ENCODE measurements at regions of chr12 and their contacts with region 1.

Region 1: GRCh38 chr12:23204933-23205778 is 580.2 kb downstream of the ETNK1 start:
- DNase-seq: peak; percentile 65
- H3K4me3 ChIP-seq: no peak overlapping the region
- H3K27ac ChIP-seq: no peak overlapping the region
- H3K4me1 ChIP-seq: no peaks in the 10 kb centered on the region
- H3K27me3 ChIP-seq: peaks cover 0 to 3% of the 10 kb centered on the region in 2 experiments
- CTCF ChIP-seq: peak; percentile 67 to 74
- POLR2A ChIP-seq: no peak

Region 2: GRCh38 chr12:23361971-23362370 is 156.8 kb after region 1 on chr12:
- CTCF ChIA-PET with region 1: interaction called, 3 read pairs
- POLR2A ChIA-PET with region 1: no interaction called
- dilution Hi-C with region 1: no loop called
- intact Hi-C with region 1: loop called (anchors 5 kb)
- DNase-seq: no peak
- H3K4me3 ChIP-seq: no peak overlapping the region
- H3K27ac ChIP-seq: no peak overlapping the region
- H3K4me1 ChIP-seq: no peaks in the 10 kb centered on the region
- H3K27me3 ChIP-seq: no peaks in the 10 kb centered on the region
- CTCF ChIP-seq: peak in 1 of 2 donors; percentile 14
- POLR2A ChIP-seq: no peak

Region 3: GRCh38 chr12:23376238-23376637 is 171.1 kb after region 1 on chr12:
- CTCF ChIA-PET with region 1: interaction called, 22 read pairs
- POLR2A ChIA-PET with region 1: no interaction called
- dilution Hi-C with region 1: no loop called
- intact Hi-C with region 1: no loop called
- DNase-seq: peak; percentile 12
- H3K4me3 ChIP-seq: no peak overlapping the region
- H3K27ac ChIP-seq: no peak overlapping the region
- H3K4me1 ChIP-seq: no peaks in the 10 kb centered on the region
- H3K27me3 ChIP-seq: no peaks in the 10 kb centered on the region
- CTCF ChIP-seq: peak; percentile 4 to 16
- POLR2A ChIP-seq: no peak

Region 4: DNA sequence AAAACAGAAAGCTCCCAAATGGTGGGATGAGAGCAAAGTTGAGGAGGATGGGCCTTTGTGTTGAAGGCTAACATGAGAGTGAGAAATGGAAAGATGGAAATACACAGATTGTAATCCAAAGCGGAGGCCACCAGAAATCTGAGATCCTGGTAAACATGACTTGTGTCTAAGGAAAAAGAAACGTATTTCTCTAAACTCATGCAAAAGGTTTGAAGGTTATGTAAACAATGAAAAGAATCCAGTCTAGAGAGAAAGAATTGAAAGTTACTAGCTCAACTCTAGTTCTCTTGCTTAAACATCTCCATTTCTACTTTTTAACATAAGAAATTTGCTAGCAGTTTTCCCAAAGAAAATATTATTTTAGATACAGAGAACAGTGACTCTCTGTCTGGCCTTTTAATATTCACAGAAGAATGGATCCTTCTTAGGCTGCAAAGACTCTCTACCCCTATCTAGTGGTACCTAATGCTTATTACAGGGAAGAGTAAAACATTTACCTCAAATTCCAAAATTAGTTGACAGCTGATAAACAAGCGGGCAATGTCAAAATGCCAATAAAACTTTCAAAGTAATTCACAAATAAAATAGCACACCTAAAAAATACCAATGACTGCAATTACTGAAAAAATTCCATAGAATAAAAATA is 820.1 kb after region 1 on chr12:
- CTCF ChIA-PET with region 1: no interaction called
- POLR2A ChIA-PET with region 1: no interaction called
- dilution Hi-C with region 1: no loop called
- intact Hi-C with region 1: loop called (anchors 5 kb)
- DNase-seq: no peak
- H3K4me3 ChIP-seq: no peak overlapping the region
- H3K27ac ChIP-seq: no peak overlapping the region
- H3K4me1 ChIP-seq: no peaks in the 10 kb centered on the region
- H3K27me3 ChIP-seq: peaks cover 7 to 12% of the 10 kb centered on the region in 2 experiments
- CTCF ChIP-seq: peak; percentile 21 to 40
- POLR2A ChIP-seq: no peak

Region 5: GRCh38 chr12:24728366-24728765 is 1523.2 kb after region 1 on chr12:
- CTCF ChIA-PET with region 1: no interaction called
- POLR2A ChIA-PET with region 1: no interaction called
- dilution Hi-C with region 1: no loop called
- intact Hi-C with region 1: loop called (anchors 5 kb)
- DNase-seq: peak; percentile 31
- H3K4me3 ChIP-seq: no peak overlapping the region
- H3K27ac ChIP-seq: no peak overlapping the region
- H3K4me1 ChIP-seq: no peaks in the 10 kb centered on the region
- H3K27me3 ChIP-seq: peaks cover 2 to 3% of the 10 kb centered on the region in 2 experiments
- CTCF ChIP-seq: peak; percentile 10 to 48
- POLR2A ChIP-seq: no peak

Region 6: DNA sequence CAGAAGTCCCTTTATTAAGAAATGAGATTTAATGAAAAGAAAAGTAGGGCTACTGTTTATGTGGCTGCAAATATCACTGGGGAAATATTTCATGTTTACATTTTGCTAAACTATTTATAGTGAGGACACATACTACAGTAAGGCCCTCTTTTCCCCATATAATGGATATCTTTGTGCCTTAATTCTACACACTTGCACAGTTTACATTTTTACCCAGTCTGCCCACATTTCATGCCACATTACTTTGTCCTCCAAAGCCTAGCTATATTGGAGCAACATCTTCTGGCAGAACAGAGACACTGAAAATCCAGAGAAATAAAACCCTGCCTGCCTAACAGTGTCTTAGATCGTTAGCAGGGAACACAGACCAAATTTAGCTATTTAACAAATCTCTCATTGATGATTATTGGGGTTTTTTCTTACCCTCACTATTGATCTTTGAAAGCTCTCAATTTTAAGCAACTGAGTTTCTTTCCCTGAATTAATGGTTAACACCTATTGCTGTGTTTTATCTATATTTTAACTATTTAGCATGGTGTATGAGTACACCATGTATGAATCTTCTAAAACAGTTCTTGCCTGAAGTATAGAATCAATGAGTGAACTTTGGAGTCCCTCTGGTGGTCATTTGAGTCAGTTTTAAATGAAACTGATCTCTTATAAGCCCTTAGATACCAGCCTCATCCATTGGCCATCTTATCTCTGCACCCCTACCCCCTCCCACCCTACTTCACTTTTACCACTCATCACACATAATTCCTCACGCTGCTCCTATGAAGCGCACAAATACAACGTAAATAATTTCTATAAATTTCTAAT is 1573.5 kb after region 1 on chr12:
- CTCF ChIA-PET with region 1: interaction called, 8 read pairs
- POLR2A ChIA-PET with region 1: no interaction called
- dilution Hi-C with region 1: no loop called
- intact Hi-C with region 1: loop called (anchors 1 kb)
- DNase-seq: peak; percentile 39
- H3K4me3 ChIP-seq: no peak overlapping the region
- H3K27ac ChIP-seq: no peak overlapping the region
- H3K4me1 ChIP-seq: no peaks in the 10 kb centered on the region
- H3K27me3 ChIP-seq: peaks cover 0 to 4% of the 10 kb centered on the region in 2 experiments
- CTCF ChIP-seq: peak; percentile 17 to 26
- POLR2A ChIP-seq: no peak

Measured in endothelial cell of umbilical vein (primary cell).